ENCODE measurements at regions of chrX and their contacts with region 1.

Region 1: DNA sequence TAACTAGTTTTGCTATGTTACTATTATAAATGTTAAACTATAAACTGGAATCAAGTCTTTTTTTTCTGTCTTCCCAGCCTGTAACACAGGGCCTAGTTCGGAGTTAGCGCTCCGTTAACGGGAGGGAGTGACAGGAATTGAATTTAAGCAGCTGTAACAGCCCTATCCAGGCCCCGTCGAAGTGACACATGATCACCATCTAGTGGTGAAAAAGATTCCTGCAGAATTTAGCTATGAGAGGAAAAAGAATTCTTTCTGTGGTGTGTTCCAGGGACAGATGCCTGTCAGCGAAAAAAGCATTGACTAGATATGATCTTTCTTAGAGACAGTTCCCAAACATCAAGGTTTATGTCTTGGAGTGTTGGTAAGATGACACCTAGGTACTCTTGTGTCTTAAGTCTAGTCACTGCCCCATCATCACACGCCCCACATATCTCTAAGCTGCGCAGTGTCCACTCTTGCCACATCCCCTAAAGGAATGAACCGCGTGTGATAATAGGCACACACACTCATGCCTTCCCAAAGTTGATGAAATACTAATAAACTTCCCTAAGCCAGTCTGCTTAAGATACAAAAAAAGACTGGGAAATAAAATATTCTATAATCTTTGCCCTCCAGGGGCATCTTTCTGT is 2.0 kb downstream of the GAB3 start:
- DNase-seq: peak; percentile 88
- H3K4me3 Mint-ChIP-seq: peak overlapping the region; percentile 59
- H3K27ac Mint-ChIP-seq: no peak overlapping the region
- H3K4me1 Mint-ChIP-seq: peaks cover 15% of the 10 kb centered on the region
- H3K27me3 Mint-ChIP-seq: peaks cover 5% of the 10 kb centered on the region

Region 2: GRCh38 chrX:154714925-154715324 is 33.9 kb before region 1 on chrX:
- intact Hi-C with region 1: loop called (anchors 1 kb)
- DNase-seq: peak; percentile 87
- H3K4me3 Mint-ChIP-seq: no peak overlapping the region
- H3K27ac Mint-ChIP-seq: no peak overlapping the region
- H3K4me1 Mint-ChIP-seq: peaks cover 48% of the 10 kb centered on the region
- H3K27me3 Mint-ChIP-seq: no peaks in the 10 kb centered on the region

Region 3: GRCh38 chrX:154734061-154734781 is 14.6 kb before region 1 on chrX:
- intact Hi-C with region 1: loop called (anchors 2 kb)
- DNase-seq: peak; percentile 80
- H3K4me3 Mint-ChIP-seq: peak overlapping the region; percentile 75
- H3K27ac Mint-ChIP-seq: peak overlapping the region; percentile 95
- H3K4me1 Mint-ChIP-seq: peaks cover 80% of the 10 kb centered on the region
- H3K27me3 Mint-ChIP-seq: no peaks in the 10 kb centered on the region

Region 4: GRCh38 chrX:154840856-154841255 is 92.0 kb after region 1 on chrX:
- intact Hi-C with region 1: loop called (anchors 2 kb)
- DNase-seq: peak; percentile 56
- H3K4me3 Mint-ChIP-seq: no peak overlapping the region
- H3K27ac Mint-ChIP-seq: no peak overlapping the region
- H3K4me1 Mint-ChIP-seq: peaks cover 3% of the 10 kb centered on the region
- H3K27me3 Mint-ChIP-seq: peaks cover 4% of the 10 kb centered on the region

Region 5: GRCh38 chrX:154890990-154891639 is 142.3 kb after region 1 on chrX:
- intact Hi-C with region 1: no loop called
- DNase-seq: no peak
- H3K4me3 Mint-ChIP-seq: no peak overlapping the region
- H3K27ac Mint-ChIP-seq: no peak overlapping the region
- H3K4me1 Mint-ChIP-seq: peaks cover 2% of the 10 kb centered on the region
- H3K27me3 Mint-ChIP-seq: peaks cover 7% of the 10 kb centered on the region

Measured in activated CD4-positive, alpha-beta T cell treated with anti-CD3 and anti-CD28 coated beads, Interleukin-2, amount 10 ng/mL, durations not matched to agents 24 days and 14 days (primary cell).